ENCODE measurements at regions of chrX and their contacts with region 1.

Region 1: GRCh38 chrX:43741843-43742573 is 85.9 kb downstream of the MAOA start:
- DNase-seq: peak; percentile 42 to 53
- H3K4me3 ChIP-seq: no peak overlapping the region
- H3K27ac ChIP-seq: peak overlapping the region; percentile 64 to 72 (median 66)
- H3K4me1 ChIP-seq: peaks cover 10 to 57% of the 10 kb centered on the region in 2 donors
- H3K27me3 ChIP-seq: no peaks in the 10 kb centered on the region
- CTCF ChIP-seq: no peak
- POLR2A ChIP-seq: peak in 1 of 2 donors; percentile 22

Region 2: GRCh38 chrX:43349363-43349762 is 392.6 kb before region 1 on chrX:
- intact Hi-C with region 1: loop called (anchors 10 kb)
- DNase-seq: peak; percentile 21 to 36
- H3K4me3 ChIP-seq: no peak overlapping the region
- H3K27ac ChIP-seq: no peak overlapping the region
- H3K4me1 ChIP-seq: no peaks in the 10 kb centered on the region
- H3K27me3 ChIP-seq: no peaks in the 10 kb centered on the region
- CTCF ChIP-seq: peak in 4 of 6 experiments; percentile 49 to 57 (median 52)
- POLR2A ChIP-seq: no peak

Region 3: DNA sequence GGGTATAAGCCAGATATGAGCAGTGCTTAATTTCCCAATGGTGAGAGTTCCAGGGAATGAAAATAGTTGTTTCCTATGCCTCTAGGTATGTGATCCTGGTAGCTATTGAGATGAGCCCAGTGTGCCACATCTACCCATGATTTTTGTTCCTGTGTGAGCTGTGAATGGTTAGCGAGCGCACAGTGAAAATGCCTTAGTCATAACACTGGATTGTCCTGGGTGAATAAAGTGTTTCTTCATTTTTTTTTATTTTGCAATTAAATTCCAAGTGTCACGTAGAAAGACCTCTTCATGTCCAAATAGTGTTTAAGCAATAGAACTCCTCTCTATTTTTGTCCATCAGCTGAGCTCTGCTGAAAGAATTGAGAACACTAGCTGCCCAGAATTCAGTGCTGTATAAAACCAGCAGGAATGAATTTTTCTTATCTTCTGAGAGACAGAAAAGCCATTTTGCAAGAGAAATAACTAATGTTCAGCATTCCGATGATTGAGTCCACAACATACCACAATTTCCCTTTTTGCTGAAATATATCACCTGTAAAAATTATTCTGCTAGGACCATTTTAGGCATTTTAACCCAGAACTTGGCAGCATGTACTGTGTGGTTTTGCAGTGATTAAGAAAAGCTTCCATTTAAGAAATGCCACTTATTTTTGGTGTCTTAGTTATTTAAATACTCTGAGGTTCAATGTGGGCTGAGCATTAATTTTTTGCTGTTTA is 80.3 kb before region 1 on chrX:
- intact Hi-C with region 1: loop called (anchors 5 kb)
- DNase-seq: peak; percentile 6 to 12
- H3K4me3 ChIP-seq: no peak overlapping the region
- H3K27ac ChIP-seq: peak overlapping the region in 2 of 3 donors; percentile 14 to 47
- H3K4me1 ChIP-seq: peaks cover 0 to 34% of the 10 kb centered on the region in 2 donors
- H3K27me3 ChIP-seq: no peaks in the 10 kb centered on the region
- CTCF ChIP-seq: no peak
- POLR2A ChIP-seq: no peak